ENCODE measurements at regions of chr16 and their contacts with region 1.

Region 1: DNA sequence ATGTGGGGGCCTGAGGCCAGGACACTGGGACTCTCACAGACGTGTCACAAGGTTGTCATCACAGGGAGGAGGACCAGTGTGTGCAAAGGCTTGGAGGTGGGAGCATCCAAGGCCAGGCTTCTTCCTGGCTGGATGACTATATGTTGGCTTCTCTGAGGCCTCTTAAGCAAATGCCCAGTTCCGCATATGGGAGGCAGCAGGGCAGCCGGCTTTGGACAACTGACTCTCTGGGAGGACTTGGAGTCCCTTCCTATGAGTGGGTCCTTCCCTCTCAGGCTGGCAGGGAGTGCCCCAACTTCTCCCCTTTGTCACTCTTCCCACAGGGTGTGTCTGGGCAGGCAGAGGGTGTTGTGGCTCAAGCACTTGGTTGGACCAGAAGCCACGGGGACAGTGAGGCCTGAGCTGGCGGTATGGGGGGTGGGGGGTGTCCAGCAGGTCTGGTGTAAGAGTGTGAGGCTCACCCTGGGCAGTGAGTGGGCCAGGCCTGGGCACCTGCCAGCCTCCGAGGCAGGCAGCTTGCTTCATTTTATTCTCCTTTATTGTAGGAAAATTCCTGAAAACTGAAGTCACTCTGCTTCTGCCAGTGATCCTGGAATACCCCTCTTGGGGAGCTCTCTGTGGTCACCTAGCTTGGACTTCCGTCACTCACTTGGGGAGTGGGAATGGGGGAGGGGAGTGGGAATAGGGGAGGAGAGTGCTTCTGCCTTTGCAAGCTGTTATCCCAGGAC is 14.9 kb downstream of the ADGRG1 start:
- DNase-seq: no peak
- H3K4me3 ChIP-seq: no peak overlapping the region
- H3K27ac ChIP-seq: peak overlapping the region in 1 of 4 donors; percentile 60
- H3K4me1 ChIP-seq: peaks cover under 1 to 12% (median 7%) of the 10 kb centered on the region in 4 donors
- H3K27me3 ChIP-seq: no peaks in the 10 kb centered on the region
- CTCF ChIP-seq: no peak
- EP300 ChIP-seq: no peak
- POLR2A ChIP-seq: no peak

Region 2: DNA sequence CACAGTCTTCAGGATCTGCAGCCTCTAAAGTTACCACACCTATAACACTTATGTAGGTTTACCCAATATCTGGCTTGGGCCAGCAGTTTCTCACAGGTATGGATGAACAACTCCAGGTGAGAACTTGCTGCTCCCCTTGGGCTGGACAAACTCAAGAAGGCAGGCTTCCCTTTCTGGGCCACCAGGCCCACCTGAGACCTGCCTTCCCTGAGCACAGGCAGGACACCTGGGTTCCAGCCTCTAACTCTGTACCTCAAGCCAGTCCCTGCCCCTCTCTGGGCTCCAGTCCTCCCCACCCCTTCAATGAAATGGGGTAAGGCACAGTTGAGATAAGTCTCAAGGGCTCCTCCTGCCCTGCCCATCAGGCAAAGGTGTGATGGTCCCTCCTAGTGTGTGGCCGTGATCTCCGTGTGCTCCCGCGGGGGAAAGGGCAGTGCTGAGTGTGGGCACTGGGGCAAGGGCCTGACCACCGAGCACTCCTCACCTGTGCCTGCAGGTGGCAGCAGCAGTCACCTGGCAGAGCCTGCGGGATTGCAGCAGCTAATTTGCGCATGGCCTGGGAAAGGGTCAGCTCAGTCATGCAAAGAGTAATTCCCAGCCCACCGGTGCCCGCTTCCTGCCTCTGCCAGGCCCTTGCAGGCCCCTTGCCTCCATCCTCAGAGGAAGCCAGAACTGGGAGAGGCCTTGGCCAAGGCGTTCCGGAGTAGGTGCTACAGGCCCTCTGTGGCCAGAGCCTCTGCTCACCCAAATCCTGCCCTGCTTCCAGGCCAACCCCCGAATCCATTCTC is 43.1 kb before region 1 on chr16:
- in situ Hi-C with region 1: loop called in 2 of 4 experiments (anchors 5 to 10 kb)
- intact Hi-C with region 1: no loop called
- DNase-seq: peak; percentile 75
- H3K4me3 ChIP-seq: no peak overlapping the region
- H3K27ac ChIP-seq: peak overlapping the region in 1 of 4 donors; percentile 31
- H3K4me1 ChIP-seq: peaks cover 0 to 6% (median 1%) of the 10 kb centered on the region in 4 donors
- H3K27me3 ChIP-seq: peaks cover 8% of the 10 kb centered on the region
- CTCF ChIP-seq: peak; percentile 64 to 92 (median 75)
- EP300 ChIP-seq: no peak
- POLR2A ChIP-seq: no peak

Measured in transverse colon (tissue), 4 donors.